Naive thymus-derived CD8-positive, alpha-beta T cell (primary cell): ENCODE measurements at regions of chr19 and their contacts with region 1.

Region 1: DNA sequence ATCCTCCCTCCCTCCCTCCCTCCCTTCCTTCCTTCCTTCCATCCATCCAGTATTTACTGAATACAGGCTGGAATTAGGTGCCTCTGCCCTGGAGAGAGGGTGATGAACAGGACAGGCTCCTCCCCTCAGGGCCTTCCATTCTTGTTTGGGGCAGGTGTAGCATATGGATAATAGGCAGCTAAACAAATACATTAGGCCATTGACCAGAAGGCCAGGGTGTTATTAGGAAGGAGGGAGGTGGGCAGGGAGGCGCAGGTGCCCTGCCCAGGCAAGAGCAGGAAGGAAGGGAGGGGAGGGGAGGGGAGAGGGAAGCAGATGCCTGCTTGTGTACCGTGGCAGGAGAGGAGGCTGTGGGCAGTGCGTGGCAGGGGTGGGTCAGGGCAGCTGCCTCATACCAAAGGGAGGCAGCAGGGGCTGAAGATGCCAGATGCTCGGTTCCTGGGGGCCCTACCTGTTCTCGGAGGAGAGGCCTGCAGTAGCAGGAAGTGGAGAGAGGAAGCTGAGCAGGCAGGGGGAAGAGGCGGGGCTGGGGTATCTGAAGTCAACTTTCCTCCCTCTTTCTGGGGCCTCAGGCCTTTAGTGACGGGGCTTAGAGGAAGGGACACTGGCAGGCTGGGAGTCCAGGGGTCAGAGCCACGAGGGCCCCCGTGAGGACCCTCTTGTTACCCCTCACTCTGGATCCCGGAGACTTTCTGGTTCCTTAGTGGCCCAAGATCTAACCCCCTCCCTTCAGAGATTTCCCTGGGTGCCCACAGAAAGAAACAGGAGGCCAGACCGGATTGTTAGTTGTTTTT is at the start of gene RINL:
- DNase-seq: peak; percentile 52 to 87 (median 67)
- ATAC-seq: peak; percentile 94 to 95
- H3K4me3 Mint-ChIP-seq: peak within 1 kb of the TSS; percentile 83 to 94 (median 88)
- H3K27ac Mint-ChIP-seq: peak within 1 kb of the TSS; percentile 97 to 99 (median 98)
- H3K4me1 Mint-ChIP-seq: peaks cover 21 to 53% (median 43%) of the 10 kb centered on the region in 4 donors
- H3K27me3 Mint-ChIP-seq: no peaks in the 10 kb centered on the region
- polyA plus RNA-seq, gene RINL: 29.9 to 64.7 (median 40.5) TPM

Region 2: DNA sequence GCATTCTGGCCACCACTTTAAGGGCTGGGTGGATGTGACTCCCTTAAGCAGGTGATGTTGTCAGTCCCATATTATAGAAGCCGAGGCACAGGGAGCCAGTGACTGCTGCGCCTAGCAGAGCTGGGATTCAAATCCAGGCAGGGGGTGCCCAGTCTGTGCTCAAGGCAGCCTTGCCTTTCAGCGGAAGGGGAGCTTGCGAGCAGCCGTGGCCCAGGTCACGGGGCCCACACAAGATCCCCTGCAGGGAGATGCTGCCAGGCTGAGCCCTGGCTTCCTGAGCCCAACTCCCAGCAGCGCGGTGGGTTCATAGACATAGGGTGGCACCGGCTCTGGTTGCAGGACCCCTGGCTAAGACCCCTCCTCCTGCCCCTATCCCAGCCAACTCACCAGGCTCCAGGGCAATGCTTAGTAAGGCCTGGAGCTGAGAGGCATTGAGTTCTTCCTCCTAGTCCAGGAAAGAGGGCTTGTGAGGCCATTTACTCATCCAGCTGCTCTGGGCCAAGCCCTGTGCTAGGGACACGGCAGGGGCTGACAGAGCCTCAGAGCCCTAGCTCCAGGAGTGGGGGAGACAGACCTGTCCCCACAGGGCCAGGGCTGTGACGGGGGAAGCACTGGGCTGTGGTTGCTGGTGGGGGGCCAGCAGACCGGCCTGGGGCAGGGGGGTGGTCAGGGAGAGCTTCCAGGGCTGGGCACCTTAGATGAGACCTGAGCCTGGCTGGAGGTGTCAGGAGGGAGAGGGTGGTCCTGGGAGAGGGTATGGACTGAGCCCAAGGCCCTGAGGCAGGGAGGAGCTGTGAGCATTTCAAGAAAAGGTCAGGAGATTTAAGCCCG is 143.3 kb before region 1 on chr19:
- POLR2A ChIA-PET with region 1: interaction called, 16 read pairs
- DNase-seq: peak in 4 of 10 donors; percentile 24 to 48 (median 46)
- ATAC-seq: peak; percentile 40 to 50
- H3K4me3 Mint-ChIP-seq: peak overlapping the region; percentile 71 to 86 (median 77)
- H3K27ac Mint-ChIP-seq: peak overlapping the region; percentile 44 to 92 (median 80)
- H3K4me1 Mint-ChIP-seq: peaks cover 16 to 72% (median 49%) of the 10 kb centered on the region in 4 donors
- H3K27me3 Mint-ChIP-seq: peaks cover 0 to 3% (median 0%) of the 10 kb centered on the region in 5 donors

Region 3: DNA sequence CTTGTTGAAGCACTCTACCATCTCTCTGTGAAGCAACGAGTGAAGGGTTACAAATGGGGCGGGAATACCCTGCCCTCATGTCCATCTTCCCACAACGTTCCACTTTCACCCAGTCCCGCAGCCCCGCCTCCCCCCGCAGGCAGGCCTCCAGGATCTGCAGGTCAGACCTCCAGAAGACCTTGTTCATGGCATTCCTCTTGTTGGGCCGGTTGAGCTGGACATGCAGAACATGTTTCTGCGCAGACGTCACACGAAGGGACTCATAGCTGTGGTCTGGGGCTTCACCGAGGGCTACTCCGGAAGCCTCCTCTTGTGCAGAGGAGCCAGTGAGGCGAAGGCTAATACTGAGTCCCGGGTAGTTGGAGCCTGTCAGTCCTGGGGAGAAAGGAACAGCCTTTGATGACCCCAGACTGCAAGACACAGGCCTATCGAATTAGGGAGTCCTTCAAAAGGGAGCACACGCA is 46.8 kb before region 1 on chr19:
- POLR2A ChIA-PET with region 1: interaction called, 17 read pairs
- DNase-seq: peak in 1 of 10 donors; percentile 13
- ATAC-seq: no peak
- H3K4me3 Mint-ChIP-seq: peak overlapping the region; percentile 90 to 97 (median 94)
- H3K27ac Mint-ChIP-seq: peak overlapping the region; percentile 87 to 99 (median 96)
- H3K4me1 Mint-ChIP-seq: peaks cover 9 to 53% (median 44%) of the 10 kb centered on the region in 4 donors
- H3K27me3 Mint-ChIP-seq: no peaks in the 10 kb centered on the region

Region 4: GRCh38 chr19:38849860-38850435 is 28.0 kb before region 1 on chr19 and contains the start of gene HNRNPL:
- POLR2A ChIA-PET with region 1: interaction called, 65 read pairs
- DNase-seq: peak; percentile 98 to 100 (median 99)
- ATAC-seq: peak; percentile 66 to 69
- H3K4me3 Mint-ChIP-seq: peak within 1 kb of the TSS; percentile 92 to 99 (median 95)
- H3K27ac Mint-ChIP-seq: peak within 1 kb of the TSS; percentile 95 to 100 (median 99)
- H3K4me1 Mint-ChIP-seq: peaks cover 28 to 61% (median 57%) of the 10 kb centered on the region in 4 donors
- H3K27me3 Mint-ChIP-seq: peaks cover 0 to 3% (median 0%) of the 10 kb centered on the region in 5 donors
- polyA plus RNA-seq, gene HNRNPL: 70.6 to 77.6 (median 71.4) TPM

Region 5: GRCh38 chr19:38899447-38900219 is 21.7 kb after region 1 on chr19 and contains the starts of genes NFKBIB and SIRT2:
- POLR2A ChIA-PET with region 1: interaction called, 11 read pairs
- DNase-seq: peak; percentile 91 to 100 (median 99)
- ATAC-seq: peak; percentile 89
- H3K4me3 Mint-ChIP-seq: peak within 1 kb of the TSS; percentile 86 to 100 (median 97)
- H3K27ac Mint-ChIP-seq: peak within 1 kb of the TSS; percentile 93 to 100 (median 99)
- H3K4me1 Mint-ChIP-seq: peaks cover 22 to 61% (median 55%) of the 10 kb centered on the region in 4 donors
- H3K27me3 Mint-ChIP-seq: no peaks in the 10 kb centered on the region
- polyA plus RNA-seq, gene NFKBIB: 7.9 to 12.9 (median 9.5) TPM
- polyA plus RNA-seq, gene SIRT2: 28.2 to 48.0 (median 33.5) TPM

Region 6: DNA sequence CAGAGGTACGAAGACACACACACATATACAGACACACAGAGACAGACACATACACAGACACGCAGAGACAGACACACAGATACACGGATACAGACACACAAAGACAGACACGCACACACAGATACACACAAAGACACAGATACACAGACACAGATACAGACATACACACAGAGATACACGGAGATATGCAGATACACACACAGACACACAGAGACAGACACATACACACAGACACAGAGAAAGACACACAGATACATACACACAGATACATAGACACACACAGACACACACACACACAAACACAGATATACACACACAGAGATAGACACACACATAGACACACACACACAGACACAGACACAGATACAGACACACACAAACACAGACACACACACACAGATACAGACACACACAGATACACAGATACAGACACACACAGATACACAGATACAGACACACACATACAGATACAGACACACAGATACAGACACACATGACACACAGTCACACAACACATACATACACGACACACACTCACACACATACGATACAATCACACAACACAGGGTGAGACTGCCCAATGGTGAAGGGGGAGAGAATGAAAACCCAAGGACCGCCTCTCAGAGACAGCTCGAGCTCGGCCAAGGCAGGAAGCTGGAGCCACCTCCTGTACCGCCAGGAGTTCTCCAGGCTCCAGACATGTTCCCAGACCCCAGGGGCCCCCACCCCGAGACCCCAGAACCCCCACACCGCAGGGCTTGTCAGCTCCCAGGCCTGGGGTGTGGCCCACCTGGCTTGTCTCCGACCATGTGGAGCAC is 42.8 kb after region 1 on chr19:
- POLR2A ChIA-PET with region 1: no interaction called
- DNase-seq: no peak
- ATAC-seq: no peak
- H3K4me3 Mint-ChIP-seq: no peak overlapping the region
- H3K27ac Mint-ChIP-seq: no peak overlapping the region
- H3K4me1 Mint-ChIP-seq: peaks cover 0 to 14% (median 3%) of the 10 kb centered on the region in 4 donors
- H3K27me3 Mint-ChIP-seq: no peaks in the 10 kb centered on the region